ENCODE measurements at regions of chr15 and their contacts with region 1.

Region 1: GRCh38 chr15:76987926-76988860 is 6.7 kb upstream of the PSTPIP1 start:
- DNase-seq: peak; percentile 76
- H3K4me3 Mint-ChIP-seq: peak overlapping the region; percentile 58
- H3K27ac Mint-ChIP-seq: peak overlapping the region; percentile 99
- H3K4me1 Mint-ChIP-seq: peaks cover 62% of the 10 kb centered on the region
- H3K27me3 Mint-ChIP-seq: no peaks in the 10 kb centered on the region

Region 2: DNA sequence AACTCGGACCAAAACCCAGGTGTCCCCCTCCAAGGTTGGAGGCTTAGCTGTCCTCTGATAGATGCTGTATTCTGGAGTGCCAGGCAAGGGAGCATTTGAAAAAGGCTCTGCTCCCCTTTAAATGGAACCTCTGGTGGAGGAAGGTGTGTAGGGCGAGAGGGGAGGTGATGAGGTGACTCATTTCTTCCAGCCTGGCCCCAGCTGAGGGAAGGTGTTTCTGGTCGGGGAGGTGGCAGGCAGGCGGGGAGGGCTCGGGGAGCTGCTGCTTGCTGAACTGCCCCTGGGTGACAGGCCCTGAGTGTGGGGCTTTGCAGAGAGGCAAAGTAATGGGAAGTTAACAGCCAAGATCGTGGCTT is 25.6 kb after region 1 on chr15:
- intact Hi-C with region 1: loop called (anchors 1 kb)
- DNase-seq: peak; percentile 80
- H3K4me3 Mint-ChIP-seq: peak overlapping the region; percentile 39
- H3K27ac Mint-ChIP-seq: peak overlapping the region; percentile 84
- H3K4me1 Mint-ChIP-seq: peaks cover 70% of the 10 kb centered on the region
- H3K27me3 Mint-ChIP-seq: no peaks in the 10 kb centered on the region

Measured in activated T-helper 2 cell treated with anti-CD3 and anti-CD28 coated beads, Interferon-gamma antibody, Interleukin-2, Interleukin-4, amounts not matched to agents 10 μg/mL and 5 μg/mL and 100 μg/mL, durations not matched to agents 14 hours and 24 hours and 36 hours (primary cell).